ENCODE measurements at regions of chr22 and their contacts with region 1.

Region 1: GRCh38 chr22:24407278-24407665 is 20.1 kb upstream of the ADORA2A start:
- DNase-seq: no peak

Region 2: DNA sequence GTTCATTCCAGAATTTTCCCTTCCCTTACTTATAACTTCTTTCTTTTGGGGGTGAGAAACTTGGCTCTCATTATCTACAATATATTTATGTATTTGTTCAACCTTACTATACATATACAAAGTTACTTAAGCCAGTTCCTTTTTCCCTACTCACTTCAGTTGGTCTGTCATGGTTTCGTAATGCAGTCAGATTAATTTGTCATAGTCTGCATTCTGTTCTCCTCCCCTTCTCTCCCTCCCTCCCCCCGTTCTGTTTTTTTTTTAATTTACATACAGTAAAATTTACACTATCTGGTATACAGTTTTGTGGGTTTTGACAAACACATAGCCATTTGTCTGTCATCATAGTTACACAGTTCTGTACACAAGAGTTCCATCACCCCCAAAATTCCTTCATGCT is 51.7 kb before region 1 on chr22:
- intact Hi-C with region 1: loop called (anchors 5 kb)
- DNase-seq: no peak

Region 3: DNA sequence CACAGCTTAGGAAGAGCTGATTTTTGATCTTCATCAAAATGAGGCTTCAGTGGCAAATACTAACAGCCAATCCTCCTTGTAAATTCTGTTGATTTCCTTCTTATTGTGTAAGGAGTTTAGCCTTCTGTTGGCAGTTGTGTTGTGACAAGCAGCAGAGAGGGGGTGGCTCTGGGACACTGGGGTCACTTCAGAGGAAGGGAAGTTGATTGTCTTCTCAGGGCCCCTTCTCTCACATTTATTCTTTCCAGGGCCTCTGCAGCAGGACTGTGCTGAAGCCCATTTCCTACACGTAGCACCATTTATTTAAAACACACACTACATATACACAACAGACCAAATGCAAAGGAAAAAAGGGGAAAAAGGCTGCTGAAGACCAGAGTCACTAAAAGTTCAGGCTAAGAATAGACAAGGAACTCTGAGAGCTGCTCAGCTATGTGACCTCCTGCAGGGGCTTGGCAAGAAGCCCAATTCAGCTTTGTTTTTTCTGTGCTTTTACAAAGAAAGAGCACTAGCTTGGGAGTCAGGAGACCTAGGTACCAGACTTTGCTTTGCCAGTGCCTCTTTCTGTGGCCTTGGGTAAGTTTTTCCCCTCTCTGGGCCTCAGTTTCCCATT is 59.5 kb after region 1 on chr22:
- intact Hi-C with region 1: no loop called
- DNase-seq: no peak